BJ (cell line): ENCODE measurements at regions of chr20 and their contacts with region 1.

Region 1: DNA sequence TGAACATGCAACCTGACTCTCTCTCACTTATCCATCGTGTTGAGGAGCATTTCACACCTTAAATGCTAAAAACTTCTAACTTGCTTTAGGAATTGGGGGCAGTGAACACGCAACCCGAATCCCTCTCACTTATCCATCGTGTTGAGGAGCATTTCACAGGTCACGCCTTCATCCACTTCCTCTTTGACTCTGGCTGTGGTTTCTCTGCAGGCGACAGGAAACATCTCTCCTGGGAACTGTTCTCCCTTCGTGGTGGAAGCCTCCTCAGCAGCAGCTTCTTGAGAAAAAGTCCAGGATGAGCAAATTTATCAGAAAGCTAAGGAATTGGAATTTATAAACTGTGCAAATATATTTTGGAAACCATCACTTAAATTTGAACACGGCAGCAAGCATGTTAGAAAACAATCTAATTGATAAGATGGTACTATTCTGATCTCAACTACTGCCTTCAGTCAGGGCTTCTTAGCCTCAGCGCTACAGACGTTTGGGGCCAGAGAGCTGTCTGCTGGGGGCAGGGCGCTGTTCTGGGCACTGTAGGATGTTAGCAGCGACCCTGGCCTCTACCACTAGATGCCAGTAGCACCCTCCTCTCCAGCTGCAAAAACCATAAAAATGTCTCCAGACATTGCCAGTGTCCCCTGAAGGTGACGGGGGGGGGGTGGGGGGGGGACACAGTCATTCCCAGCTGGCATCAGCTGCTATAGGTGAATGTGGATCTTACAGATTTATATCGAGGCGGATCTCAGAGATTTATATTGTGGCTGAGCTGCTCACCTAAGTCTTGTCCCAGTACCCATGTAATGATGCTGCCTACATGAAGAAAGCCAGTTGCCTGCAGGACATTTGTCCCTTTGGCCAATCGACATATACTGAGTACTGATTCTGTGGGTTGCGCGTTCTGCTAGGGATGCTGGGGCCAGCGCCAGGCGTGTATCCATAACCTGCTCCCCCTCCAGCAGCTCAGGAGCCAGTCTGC is 26.2 kb downstream of the CTCFL start:
- DNase-seq: no peak
- H3K4me3 ChIP-seq: no peak overlapping the region
- H3K27me3 ChIP-seq: no peaks in the 10 kb centered on the region; the same call in 1 of the 2 replicates
- CTCF ChIP-seq: peak; percentile 61

Region 2: DNA sequence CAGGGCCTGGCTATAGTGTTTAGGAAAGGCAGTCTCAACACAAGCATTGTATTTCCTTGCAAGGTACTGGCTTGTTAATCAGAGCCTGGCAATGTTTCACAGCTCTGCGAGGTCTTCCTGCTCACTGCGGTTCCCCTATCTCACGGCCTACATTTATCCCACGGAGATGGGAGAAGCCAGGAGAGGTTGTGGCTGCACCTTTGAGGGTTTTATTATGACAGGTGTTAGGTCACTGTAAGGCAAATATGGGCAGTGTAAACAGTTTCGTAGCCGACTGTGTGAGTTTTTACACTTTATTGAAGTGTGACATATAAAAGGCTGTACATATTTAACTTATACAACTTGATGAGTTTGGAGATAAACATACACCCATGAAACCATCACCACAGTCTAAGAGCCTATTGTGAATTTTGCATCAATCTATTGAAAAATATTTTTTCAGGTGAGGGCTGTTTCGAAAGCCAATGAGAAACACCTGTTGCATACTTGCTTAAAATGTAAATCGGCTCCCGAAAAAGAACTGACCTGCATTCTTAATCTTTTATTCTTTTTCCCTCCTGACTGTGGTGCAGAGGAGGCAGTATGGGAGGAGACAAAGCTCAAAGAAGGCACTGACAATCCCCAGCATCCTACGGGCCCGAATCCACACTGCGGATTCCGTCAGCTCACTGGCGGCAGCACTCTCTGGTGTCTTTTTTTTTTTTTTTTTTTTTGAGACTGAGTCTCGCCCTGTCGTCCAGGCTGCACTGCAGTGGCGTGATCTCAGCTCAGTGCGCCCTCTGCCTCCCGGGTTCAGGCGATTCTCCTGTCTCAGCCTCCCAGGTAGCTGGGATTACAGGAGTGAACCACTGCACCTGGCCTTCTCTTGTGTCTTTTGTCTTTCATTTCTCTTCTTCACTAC is 115.0 kb before region 1 on chr20:
- CTCF ChIA-PET with region 1: interaction called, 32 read pairs
- POLR2A ChIA-PET with region 1: no interaction called
- DNase-seq: no peak
- H3K4me3 ChIP-seq: no peak overlapping the region
- H3K27me3 ChIP-seq: no peaks in the 10 kb centered on the region
- CTCF ChIP-seq: no peak

Region 3: GRCh38 chr20:57388953-57389694 is 109.6 kb before region 1 on chr20:
- CTCF ChIA-PET with region 1: interaction called, 19 read pairs
- POLR2A ChIA-PET with region 1: no interaction called
- DNase-seq: peak; percentile 3
- H3K4me3 ChIP-seq: peak overlapping the region; percentile 8; the same call in 1 of the 2 replicates
- H3K27me3 ChIP-seq: no peaks in the 10 kb centered on the region
- CTCF ChIP-seq: peak; percentile 41

Region 4: GRCh38 chr20:57514273-57514751 is 15.6 kb after region 1 on chr20:
- CTCF ChIA-PET with region 1: interaction called, 10 read pairs
- POLR2A ChIA-PET with region 1: no interaction called
- DNase-seq: no peak
- H3K4me3 ChIP-seq: no peak overlapping the region
- H3K27me3 ChIP-seq: peaks cover 10% of the 10 kb centered on the region
- CTCF ChIP-seq: peak; percentile 79